Activated B cell treated with CpG ODN at 0.5 μM for 24 hours (primary cell): ENCODE measurements at regions of chr4 and their contacts with region 1.

Region 1: DNA sequence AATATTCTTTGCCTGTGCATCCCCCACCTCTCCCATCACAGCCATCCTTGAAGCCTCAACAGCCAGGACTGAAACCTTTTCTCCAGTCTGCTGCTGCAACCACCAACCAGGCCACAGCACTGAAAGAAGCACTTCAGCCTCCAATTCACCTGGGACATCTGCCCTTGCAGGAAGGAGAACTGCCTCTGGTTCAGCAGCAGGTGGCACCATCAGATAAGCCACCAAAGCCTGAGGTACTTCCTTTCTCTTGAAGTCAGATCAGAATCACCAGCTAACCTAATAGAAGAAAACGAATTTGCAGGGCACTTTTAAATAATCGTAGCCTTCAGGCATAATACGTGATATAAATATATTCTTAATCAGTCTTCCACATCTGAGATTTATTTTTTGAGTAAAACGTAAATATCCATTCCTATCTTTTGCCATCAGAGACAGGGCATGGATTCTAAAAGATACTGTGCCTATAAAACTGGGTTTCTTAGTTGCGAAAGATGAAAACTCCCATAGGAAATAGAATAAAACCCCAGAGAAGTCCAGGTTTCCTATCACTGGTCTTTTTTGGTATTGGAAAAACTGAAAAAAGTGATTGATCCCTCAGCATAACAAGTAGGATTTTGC is 9.5 kb downstream of the AMBN start:
- DNase-seq: peak; percentile 45
- ATAC-seq: peak; percentile 84
- H3K4me3 Mint-ChIP-seq: no peak overlapping the region
- H3K27ac Mint-ChIP-seq: no peak overlapping the region
- H3K4me1 Mint-ChIP-seq: no peaks in the 10 kb centered on the region
- H3K27me3 Mint-ChIP-seq: peaks cover 2% of the 10 kb centered on the region
- CTCF ChIP-seq: no peak

Region 2: DNA sequence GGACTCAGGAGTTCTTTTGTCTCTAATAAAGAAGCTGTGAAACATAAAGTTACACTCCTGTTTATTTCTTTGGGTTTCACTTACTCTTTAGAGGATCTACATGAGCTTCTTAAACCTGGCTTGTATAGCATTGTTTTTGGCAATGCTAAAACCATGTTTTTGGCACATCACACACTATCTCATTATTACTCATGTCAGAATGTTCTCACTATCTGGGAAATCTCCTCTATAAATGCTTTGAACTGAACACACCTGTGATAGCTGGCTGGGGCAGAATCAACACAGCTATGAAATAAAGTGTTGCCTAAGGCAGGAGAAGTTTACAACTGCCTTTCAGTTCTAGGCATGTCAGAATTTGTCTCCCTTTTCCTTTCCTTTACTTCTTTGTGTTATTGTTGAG is 893.7 kb before region 1 on chr4:
- CTCF ChIA-PET with region 1: no interaction called
- POLR2A ChIA-PET with region 1: no interaction called
- intact Hi-C with region 1: no loop called
- DNase-seq: no peak
- ATAC-seq: no peak
- H3K4me3 Mint-ChIP-seq: no peak overlapping the region
- H3K27ac Mint-ChIP-seq: no peak overlapping the region
- H3K4me1 Mint-ChIP-seq: no peaks in the 10 kb centered on the region
- H3K27me3 Mint-ChIP-seq: no peaks in the 10 kb centered on the region
- CTCF ChIP-seq: no peak

Region 3: DNA sequence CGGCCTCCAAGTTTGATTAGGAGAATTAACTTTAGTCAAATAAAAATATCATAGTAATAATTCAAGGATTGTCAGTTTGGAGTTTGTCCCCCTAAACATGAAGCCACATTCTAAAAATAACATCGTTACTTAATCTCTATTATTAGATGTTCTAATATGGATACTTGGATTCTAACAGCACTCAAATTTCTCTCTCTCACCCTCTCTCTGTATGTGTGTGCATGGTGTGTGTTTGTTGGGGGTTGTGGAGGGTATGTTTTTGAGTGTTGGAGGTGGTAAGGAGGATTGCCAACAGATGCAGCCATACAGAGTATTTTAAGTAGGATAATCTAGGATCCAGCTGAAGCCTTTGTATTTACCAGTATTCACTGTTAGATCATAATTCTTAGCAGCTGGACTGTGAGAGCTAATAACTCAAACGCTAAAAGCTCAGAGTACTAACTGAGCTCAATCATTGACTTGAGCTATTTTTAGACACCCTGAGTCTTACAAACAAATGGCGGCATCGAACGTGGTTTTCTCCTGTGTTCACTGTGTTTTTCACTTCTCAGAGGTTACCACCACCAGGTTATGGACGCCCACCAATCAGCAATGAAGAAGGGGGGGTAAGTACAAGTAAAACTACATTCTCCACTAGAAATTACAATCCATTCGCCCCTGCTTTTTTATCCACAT is 35.8 kb after region 1 on chr4:
- CTCF ChIA-PET with region 1: no interaction called
- POLR2A ChIA-PET with region 1: no interaction called
- intact Hi-C with region 1: no loop called
- DNase-seq: no peak
- ATAC-seq: no peak
- H3K4me3 Mint-ChIP-seq: no peak overlapping the region
- H3K27ac Mint-ChIP-seq: no peak overlapping the region
- H3K4me1 Mint-ChIP-seq: no peaks in the 10 kb centered on the region
- H3K27me3 Mint-ChIP-seq: no peaks in the 10 kb centered on the region
- CTCF ChIP-seq: no peak

Region 4: GRCh38 chr4:70704331-70705145 is 103.0 kb after region 1 on chr4:
- CTCF ChIA-PET with region 1: interaction called, 4 read pairs
- POLR2A ChIA-PET with region 1: no interaction called
- intact Hi-C with region 1: loop called (anchors 1 kb)
- DNase-seq: peak; percentile 69
- ATAC-seq: peak; percentile 67
- H3K4me3 Mint-ChIP-seq: peak overlapping the region; percentile 93
- H3K27ac Mint-ChIP-seq: peak overlapping the region; percentile 89
- H3K4me1 Mint-ChIP-seq: peaks cover 34% of the 10 kb centered on the region
- H3K27me3 Mint-ChIP-seq: no peaks in the 10 kb centered on the region
- CTCF ChIP-seq: no peak

Region 5: GRCh38 chr4:71553605-71554004 is 952.1 kb after region 1 on chr4:
- CTCF ChIA-PET with region 1: no interaction called
- POLR2A ChIA-PET with region 1: no interaction called
- intact Hi-C with region 1: loop called (anchors 1 kb)
- DNase-seq: no peak
- ATAC-seq: no peak
- H3K4me3 Mint-ChIP-seq: no peak overlapping the region
- H3K27ac Mint-ChIP-seq: no peak overlapping the region
- H3K4me1 Mint-ChIP-seq: no peaks in the 10 kb centered on the region
- H3K27me3 Mint-ChIP-seq: peaks cover 2% of the 10 kb centered on the region
- CTCF ChIP-seq: no peak

Region 6: GRCh38 chr4:72302981-72303704 is 1701.6 kb after region 1 on chr4:
- CTCF ChIA-PET with region 1: interaction called, 27 read pairs
- POLR2A ChIA-PET with region 1: no interaction called
- intact Hi-C with region 1: loop called (anchors 1 kb)
- DNase-seq: peak; percentile 15
- ATAC-seq: peak; percentile 50
- H3K4me3 Mint-ChIP-seq: no peak overlapping the region
- H3K27ac Mint-ChIP-seq: no peak overlapping the region
- H3K4me1 Mint-ChIP-seq: no peaks in the 10 kb centered on the region
- H3K27me3 Mint-ChIP-seq: no peaks in the 10 kb centered on the region
- CTCF ChIP-seq: no peak